Activated B cell treated with CpG ODN at 0.5 μM for 24 hours (primary cell): ENCODE measurements at regions of chr12 and their contacts with region 1.

Region 1: GRCh38 chr12:92516277-92516600 is 186.6 kb upstream of the PLEKHG7 start:
- DNase-seq: no peak
- ATAC-seq: peak; percentile 62
- H3K4me3 Mint-ChIP-seq: no peak overlapping the region
- H3K27ac Mint-ChIP-seq: peak overlapping the region; percentile 37
- H3K4me1 Mint-ChIP-seq: peaks cover 48% of the 10 kb centered on the region
- H3K27me3 Mint-ChIP-seq: no peaks in the 10 kb centered on the region
- CTCF ChIP-seq: no peak

Region 2: GRCh38 chr12:91657032-91657431 is 859.2 kb before region 1 on chr12:
- CTCF ChIA-PET with region 1: no interaction called
- POLR2A ChIA-PET with region 1: interaction called, 10 read pairs
- intact Hi-C with region 1: no loop called
- DNase-seq: no peak
- ATAC-seq: no peak
- H3K4me3 Mint-ChIP-seq: no peak overlapping the region
- H3K27ac Mint-ChIP-seq: no peak overlapping the region
- H3K4me1 Mint-ChIP-seq: no peaks in the 10 kb centered on the region
- H3K27me3 Mint-ChIP-seq: no peaks in the 10 kb centered on the region
- CTCF ChIP-seq: no peak

Region 3: DNA sequence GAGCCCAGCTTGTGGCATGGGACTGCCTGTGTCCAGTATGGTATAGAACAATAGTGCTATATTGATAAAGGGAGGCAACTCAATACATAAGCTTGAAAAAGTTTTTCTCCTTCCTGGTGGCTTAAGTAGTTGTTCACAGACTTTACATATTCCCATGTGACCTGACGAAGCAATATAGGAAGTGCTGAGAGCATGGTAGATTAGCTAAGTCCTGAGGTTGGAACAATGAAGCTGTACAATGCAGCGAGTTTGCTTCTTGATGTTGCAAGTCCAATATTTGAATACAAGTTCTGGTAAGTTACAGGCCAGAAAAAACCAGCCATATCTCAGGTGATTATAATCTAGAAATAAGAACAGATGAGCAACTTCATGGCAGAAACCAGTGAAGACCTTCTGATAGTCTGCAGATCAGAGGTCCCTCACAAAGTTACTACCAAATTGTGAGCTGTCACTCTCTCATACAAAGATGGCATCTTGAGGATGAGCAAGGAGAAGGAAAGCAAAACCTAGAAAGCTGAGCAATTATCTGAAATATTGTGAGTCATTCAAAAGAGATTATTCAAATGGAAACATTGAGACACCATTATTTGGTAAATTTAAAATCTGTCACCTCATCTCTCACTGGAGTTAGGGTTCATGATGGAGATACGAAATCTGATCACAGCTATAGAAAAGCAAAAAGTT is 297.7 kb before region 1 on chr12:
- CTCF ChIA-PET with region 1: no interaction called
- POLR2A ChIA-PET with region 1: no interaction called
- intact Hi-C with region 1: no loop called
- DNase-seq: no peak
- ATAC-seq: peak; percentile 87
- H3K4me3 Mint-ChIP-seq: peak overlapping the region; percentile 5
- H3K27ac Mint-ChIP-seq: peak overlapping the region; percentile 46
- H3K4me1 Mint-ChIP-seq: peaks cover 23% of the 10 kb centered on the region
- H3K27me3 Mint-ChIP-seq: no peaks in the 10 kb centered on the region
- CTCF ChIP-seq: no peak